ENCODE measurements at regions of chr4 and their contacts with region 1.

Region 1: DNA sequence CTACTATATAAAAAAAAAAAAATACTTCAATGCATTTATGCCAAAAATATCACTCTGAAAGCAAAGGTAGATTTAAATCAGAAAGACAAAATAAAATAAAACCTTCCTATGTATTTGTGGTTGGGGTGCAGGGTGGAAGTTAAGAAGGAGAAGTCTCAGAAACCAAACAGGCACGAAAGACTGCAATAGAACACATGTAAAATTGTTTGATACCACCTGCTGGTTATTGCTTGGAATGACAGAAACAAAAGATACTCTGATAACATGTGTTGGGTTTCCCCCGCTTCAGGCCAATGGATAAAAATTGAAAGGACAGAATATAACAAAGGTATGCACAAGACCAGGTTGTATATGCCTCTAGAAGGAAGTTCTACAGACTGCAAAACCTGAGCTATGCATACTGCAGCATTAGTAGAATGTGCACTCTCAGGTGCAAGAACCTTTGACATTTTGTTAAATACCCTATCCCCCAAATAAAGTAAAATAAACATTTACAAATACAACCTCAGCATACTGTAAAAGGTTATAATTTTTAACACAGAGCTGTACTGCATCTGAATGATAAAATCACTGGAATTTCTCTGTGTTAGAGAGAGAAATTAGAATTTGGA is 118.8 kb downstream of the GABRA2 start:
- DNase-seq: no peak
- ATAC-seq: no peak
- H3K4me3 Mint-ChIP-seq: no peak overlapping the region
- H3K27ac Mint-ChIP-seq: no peak overlapping the region
- H3K4me1 Mint-ChIP-seq: no peaks in the 10 kb centered on the region
- H3K27me3 Mint-ChIP-seq: no peaks in the 10 kb centered on the region

Region 2: GRCh38 chr4:44760142-44760898 is 1510.8 kb before region 1 on chr4:
- CTCF ChIA-PET with region 1: no interaction called
- POLR2A ChIA-PET with region 1: no interaction called
- intact Hi-C with region 1: loop called in 1 of 2 experiments (anchors 1 kb)
- DNase-seq: peak; percentile 10
- ATAC-seq: peak; percentile 53
- H3K4me3 Mint-ChIP-seq: no peak overlapping the region
- H3K27ac Mint-ChIP-seq: no peak overlapping the region
- H3K4me1 Mint-ChIP-seq: no peaks in the 10 kb centered on the region
- H3K27me3 Mint-ChIP-seq: peaks cover 17% of the 10 kb centered on the region

Region 3: GRCh38 chr4:45453258-45453853 is 817.7 kb before region 1 on chr4:
- CTCF ChIA-PET with region 1: no interaction called
- POLR2A ChIA-PET with region 1: no interaction called
- intact Hi-C with region 1: loop called in 1 of 2 experiments (anchors 10 kb)
- DNase-seq: no peak
- ATAC-seq: no peak
- H3K4me3 Mint-ChIP-seq: no peak overlapping the region
- H3K27ac Mint-ChIP-seq: no peak overlapping the region
- H3K4me1 Mint-ChIP-seq: no peaks in the 10 kb centered on the region
- H3K27me3 Mint-ChIP-seq: no peaks in the 10 kb centered on the region

Measured in activated CD4-positive, alpha-beta T cell treated with anti-CD3 and anti-CD28 coated beads for 36 hours (primary cell).